Activated CD8-positive, alpha-beta T cell treated with anti-CD3 and anti-CD28 coated beads, Interleukin-2, amount 10 ng/mL, durations not matched to agents 7 days and 5 days (primary cell): ENCODE measurements at regions of chr17 and their contacts with region 1.

Region 1: DNA sequence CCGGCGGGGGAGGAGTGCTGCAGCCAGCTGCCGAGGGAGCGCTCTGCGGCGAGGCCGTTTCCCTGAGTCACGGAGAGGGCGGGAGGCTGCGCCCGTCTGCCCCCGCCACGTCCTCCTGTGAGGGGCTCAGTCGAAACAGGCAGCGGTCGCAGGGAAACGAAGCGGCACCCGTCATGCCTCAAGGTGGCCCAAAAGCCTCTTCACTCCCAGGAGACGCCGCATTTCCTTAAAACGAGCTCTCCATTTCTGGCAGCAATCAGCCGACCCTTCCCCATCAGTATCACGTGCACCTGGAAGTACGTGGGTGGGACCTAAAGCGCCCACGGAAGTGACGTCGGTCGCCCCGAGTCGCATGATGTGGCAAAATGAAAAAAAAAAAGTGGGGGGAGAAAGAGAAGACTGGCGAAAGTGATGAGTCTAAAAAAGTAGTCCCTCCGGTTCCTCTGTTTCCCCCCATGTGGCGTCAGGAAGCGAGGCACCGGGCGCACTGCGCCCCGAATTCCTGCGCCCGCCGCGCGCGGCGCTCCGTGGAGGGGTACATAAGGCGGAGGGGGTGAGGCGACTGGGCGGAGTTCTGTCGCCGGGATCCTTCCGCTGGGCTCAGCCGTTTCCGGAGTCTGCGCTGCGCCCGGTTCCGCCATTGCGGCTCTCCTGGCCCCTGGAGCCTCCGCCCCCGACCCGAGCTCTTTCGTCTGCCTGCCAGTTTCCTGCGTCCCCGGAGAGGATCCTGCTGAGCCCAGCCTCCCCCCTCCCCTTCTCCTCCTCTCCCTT is at the start of gene CLTC:
- DNase-seq: peak; percentile 94
- ATAC-seq: peak; percentile 88
- H3K4me3 Mint-ChIP-seq: peak within 1 kb of the TSS; percentile 83
- H3K27ac Mint-ChIP-seq: peak within 1 kb of the TSS; percentile 93
- H3K4me1 Mint-ChIP-seq: peaks cover 48% of the 10 kb centered on the region
- H3K27me3 Mint-ChIP-seq: no peaks in the 10 kb centered on the region
- total RNA-seq, gene CLTC: 126 to 131 TPM

Region 2: DNA sequence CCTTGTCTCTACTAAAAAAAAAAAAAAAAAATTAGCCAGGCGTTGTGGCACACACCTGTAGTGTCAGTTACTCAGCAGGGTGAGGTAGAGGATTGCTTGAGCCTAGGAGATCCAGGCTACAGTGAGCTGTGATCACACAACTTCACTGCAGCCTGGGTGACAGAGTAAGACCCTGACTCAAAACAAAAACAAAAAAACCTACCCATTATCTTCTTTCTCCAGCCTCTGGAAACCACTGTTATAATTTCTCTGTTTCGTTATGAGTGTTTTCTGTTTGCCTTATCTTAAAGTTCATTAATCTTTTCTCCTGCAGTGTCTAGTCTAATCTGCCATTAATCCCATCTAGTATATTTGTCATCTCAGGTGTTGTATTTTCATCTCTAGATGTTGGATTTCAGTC is 18.3 kb before region 1 on chr17:
- CTCF ChIA-PET with region 1: no interaction called
- POLR2A ChIA-PET with region 1: interaction called, 12 read pairs
- DNase-seq: no peak
- ATAC-seq: no peak
- H3K4me3 Mint-ChIP-seq: no peak overlapping the region
- H3K27ac Mint-ChIP-seq: no peak overlapping the region
- H3K4me1 Mint-ChIP-seq: peaks cover 3% of the 10 kb centered on the region
- H3K27me3 Mint-ChIP-seq: no peaks in the 10 kb centered on the region

Region 3: GRCh38 chr17:59634632-59635541 is 15.4 kb after region 1 on chr17:
- CTCF ChIA-PET with region 1: interaction called, 6 read pairs
- POLR2A ChIA-PET with region 1: interaction called, 10 read pairs
- DNase-seq: no peak
- ATAC-seq: no peak
- H3K4me3 Mint-ChIP-seq: no peak overlapping the region
- H3K27ac Mint-ChIP-seq: peak overlapping the region; percentile 28
- H3K4me1 Mint-ChIP-seq: peaks cover 33% of the 10 kb centered on the region
- H3K27me3 Mint-ChIP-seq: no peaks in the 10 kb centered on the region

Region 4: GRCh38 chr17:59668816-59669215 is 49.3 kb after region 1 on chr17:
- CTCF ChIA-PET with region 1: no interaction called
- POLR2A ChIA-PET with region 1: interaction called, 15 read pairs
- DNase-seq: no peak
- ATAC-seq: no peak
- H3K4me3 Mint-ChIP-seq: no peak overlapping the region
- H3K27ac Mint-ChIP-seq: no peak overlapping the region
- H3K4me1 Mint-ChIP-seq: peaks cover 25% of the 10 kb centered on the region
- H3K27me3 Mint-ChIP-seq: no peaks in the 10 kb centered on the region